Activated B cell treated with CpG ODN at 0.5 μM for 24 hours (primary cell): ENCODE measurements at regions of chr19 and their contacts with region 1.

Region 1: GRCh38 chr19:53365134-53365898 is at the start of gene ZNF525:
- DNase-seq: peak; percentile 98
- ATAC-seq: peak; percentile 99
- H3K4me3 Mint-ChIP-seq: peak within 1 kb of the TSS; percentile 96
- H3K27ac Mint-ChIP-seq: peak within 1 kb of the TSS; percentile 98
- H3K4me1 Mint-ChIP-seq: peaks cover 34% of the 10 kb centered on the region
- H3K27me3 Mint-ChIP-seq: no peaks in the 10 kb centered on the region
- CTCF ChIP-seq: no peak
- total RNA-seq, gene ZNF525: 28.9 and 37.4 TPM in 2 replicates

Region 2: GRCh38 chr19:52993323-52994178 is 371.8 kb before region 1 on chr19:
- CTCF ChIA-PET with region 1: no interaction called
- POLR2A ChIA-PET with region 1: no interaction called
- intact Hi-C with region 1: loop called (anchors 1 kb)
- DNase-seq: peak; percentile 70
- ATAC-seq: peak; percentile 97
- H3K4me3 Mint-ChIP-seq: peak overlapping the region; percentile 84
- H3K27ac Mint-ChIP-seq: no peak overlapping the region
- H3K4me1 Mint-ChIP-seq: peaks cover 11% of the 10 kb centered on the region
- H3K27me3 Mint-ChIP-seq: peaks cover 5% of the 10 kb centered on the region
- CTCF ChIP-seq: no peak

Region 3: GRCh38 chr19:53394974-53395839 is 29.9 kb after region 1 on chr19 and contains the start of gene ZNF765:
- CTCF ChIA-PET with region 1: no interaction called
- POLR2A ChIA-PET with region 1: interaction called, 9 read pairs
- intact Hi-C with region 1: loop called (anchors 1 kb)
- DNase-seq: peak; percentile 98
- ATAC-seq: peak; percentile 99
- H3K4me3 Mint-ChIP-seq: peak within 1 kb of the TSS; percentile 95
- H3K27ac Mint-ChIP-seq: peak within 1 kb of the TSS; percentile 90
- H3K4me1 Mint-ChIP-seq: peaks cover 29% of the 10 kb centered on the region
- H3K27me3 Mint-ChIP-seq: no peaks in the 10 kb centered on the region
- CTCF ChIP-seq: no peak
- total RNA-seq, gene ZNF765: 16.2 and 18.9 TPM in 2 replicates

Region 4: GRCh38 chr19:53467485-53468262 is 102.4 kb after region 1 on chr19 and contains the start of gene ZNF813:
- CTCF ChIA-PET with region 1: no interaction called
- POLR2A ChIA-PET with region 1: no interaction called
- intact Hi-C with region 1: loop called (anchors 1 kb)
- DNase-seq: peak; percentile 97
- ATAC-seq: peak; percentile 99
- H3K4me3 Mint-ChIP-seq: peak within 1 kb of the TSS; percentile 94
- H3K27ac Mint-ChIP-seq: peak within 1 kb of the TSS; percentile 90
- H3K4me1 Mint-ChIP-seq: peaks cover 32% of the 10 kb centered on the region
- H3K27me3 Mint-ChIP-seq: peaks cover 18% of the 10 kb centered on the region
- CTCF ChIP-seq: no peak
- total RNA-seq, gene ZNF813: 8.2 and 10.7 TPM in 2 replicates